Breast epithelium (tissue), 4 donors: ENCODE measurements at regions of chr2 and their contacts with region 1.

Region 1: GRCh38 chr2:57878171-57878865 is 168.3 kb upstream of the VRK2 start:
- DNase-seq: no peak
- H3K4me3 ChIP-seq: no peak overlapping the region
- H3K27ac ChIP-seq: no peak overlapping the region
- H3K4me1 ChIP-seq: no peaks in the 10 kb centered on the region
- H3K27me3 ChIP-seq: no peaks in the 10 kb centered on the region
- CTCF ChIP-seq: no peak
- POLR2A ChIP-seq: no peak

Region 2: GRCh38 chr2:58266211-58266610 is 387.9 kb after region 1 on chr2:
- intact Hi-C with region 1: loop called (anchors 10 kb)
- DNase-seq: no peak
- H3K4me3 ChIP-seq: no peak overlapping the region
- H3K27ac ChIP-seq: no peak overlapping the region
- H3K4me1 ChIP-seq: no peaks in the 10 kb centered on the region
- H3K27me3 ChIP-seq: no peaks in the 10 kb centered on the region
- CTCF ChIP-seq: no peak
- POLR2A ChIP-seq: no peak